Activated B cell treated with CpG ODN at 0.5 μM for 24 hours (primary cell): ENCODE measurements at regions of chr17 and their contacts with region 1.

Region 1: GRCh38 chr17:68228817-68229572 is 18.8 kb upstream of the AMZ2 start:
- DNase-seq: no peak
- ATAC-seq: no peak
- H3K4me3 Mint-ChIP-seq: no peak overlapping the region
- H3K27ac Mint-ChIP-seq: peak overlapping the region; percentile 85
- H3K4me1 Mint-ChIP-seq: peaks cover 80% of the 10 kb centered on the region
- H3K27me3 Mint-ChIP-seq: no peaks in the 10 kb centered on the region
- CTCF ChIP-seq: no peak

Region 2: GRCh38 chr17:68210570-68211315 is 18.3 kb before region 1 on chr17:
- CTCF ChIA-PET with region 1: interaction called, 3 read pairs
- POLR2A ChIA-PET with region 1: interaction called, 134 read pairs
- intact Hi-C with region 1: loop called (anchors 1 kb)
- DNase-seq: no peak
- ATAC-seq: no peak
- H3K4me3 Mint-ChIP-seq: no peak overlapping the region
- H3K27ac Mint-ChIP-seq: peak overlapping the region; percentile 6
- H3K4me1 Mint-ChIP-seq: peaks cover 62% of the 10 kb centered on the region
- H3K27me3 Mint-ChIP-seq: no peaks in the 10 kb centered on the region
- CTCF ChIP-seq: no peak

Region 3: GRCh38 chr17:68273722-68274121 is 44.7 kb after region 1 on chr17:
- CTCF ChIA-PET with region 1: no interaction called
- POLR2A ChIA-PET with region 1: no interaction called
- intact Hi-C with region 1: no loop called
- DNase-seq: no peak
- ATAC-seq: no peak
- H3K4me3 Mint-ChIP-seq: no peak overlapping the region
- H3K27ac Mint-ChIP-seq: no peak overlapping the region
- H3K4me1 Mint-ChIP-seq: no peaks in the 10 kb centered on the region
- H3K27me3 Mint-ChIP-seq: no peaks in the 10 kb centered on the region
- CTCF ChIP-seq: no peak